Endothelial cell of umbilical vein (primary cell): ENCODE measurements at regions of chr12 and their contacts with region 1.

Region 1: GRCh38 chr12:27523642-27524493 is at the start of gene PPFIBP1:
- DNase-seq: peak; percentile 99
- H3K4me3 ChIP-seq: peak within 1 kb of the TSS; percentile 65 to 95 (median 80)
- H3K27ac ChIP-seq: peak within 1 kb of the TSS; percentile 77
- H3K4me1 ChIP-seq: peaks cover 25% of the 10 kb centered on the region
- H3K27me3 ChIP-seq: no peaks in the 10 kb centered on the region
- CTCF ChIP-seq: peak in 1 of 2 donors; percentile 49
- POLR2A ChIP-seq: peak; percentile 90
- total RNA-seq, gene PPFIBP1: 154 TPM in 2 replicates

Region 2: GRCh38 chr12:27140478-27140969 is 383.3 kb before region 1 on chr12:
- CTCF ChIA-PET with region 1: no interaction called
- POLR2A ChIA-PET with region 1: no interaction called
- dilution Hi-C with region 1: no loop called
- intact Hi-C with region 1: no loop called
- DNase-seq: no peak
- H3K4me3 ChIP-seq: no peak overlapping the region
- H3K27ac ChIP-seq: no peak overlapping the region
- H3K4me1 ChIP-seq: peaks cover 2% of the 10 kb centered on the region
- H3K27me3 ChIP-seq: no peaks in the 10 kb centered on the region
- CTCF ChIP-seq: no peak
- POLR2A ChIP-seq: no peak

Region 3: DNA sequence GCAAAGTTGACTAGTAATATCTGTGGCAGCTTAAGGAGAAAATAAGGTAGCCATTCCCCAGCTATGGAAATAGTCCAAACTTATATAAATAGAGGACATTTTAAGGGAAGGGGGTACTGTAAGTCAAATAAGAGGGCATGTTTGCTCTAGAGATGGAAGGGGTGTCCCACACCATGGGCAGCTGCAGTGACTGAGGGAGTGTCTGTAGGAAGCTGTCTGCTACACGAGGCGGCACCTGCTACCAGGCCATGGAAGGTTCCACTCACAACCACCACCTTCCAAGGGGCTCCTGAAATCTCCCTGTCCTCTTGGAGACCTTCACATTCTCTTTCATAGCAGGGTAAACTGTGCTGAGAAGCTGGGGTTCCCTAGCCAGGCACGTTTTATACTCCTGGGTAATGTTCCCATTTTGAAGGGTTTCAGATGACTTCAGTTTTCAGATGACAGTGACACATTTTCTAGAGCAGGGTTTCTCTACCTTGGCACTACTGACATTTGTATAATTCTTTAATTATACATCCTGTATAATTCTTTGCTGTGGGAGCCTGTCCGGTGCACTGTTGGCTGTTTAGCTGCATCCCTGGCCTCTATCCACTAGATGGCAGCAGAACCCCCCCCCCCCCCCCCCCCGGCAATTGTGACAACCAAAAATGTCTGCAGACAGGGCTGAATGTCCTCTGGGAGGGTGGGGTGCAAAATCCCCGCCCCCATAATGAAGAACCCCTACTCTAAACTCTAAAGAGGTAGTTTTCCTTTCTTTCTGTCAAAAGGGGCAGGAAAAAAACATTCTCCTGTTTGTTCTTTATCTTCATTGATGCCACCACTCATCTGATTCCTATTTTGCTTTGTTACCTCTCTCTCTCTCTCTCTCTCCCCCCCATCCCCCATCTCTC is 88.9 kb before region 1 on chr12:
- CTCF ChIA-PET with region 1: interaction called, 53 read pairs
- POLR2A ChIA-PET with region 1: no interaction called
- dilution Hi-C with region 1: no loop called
- intact Hi-C with region 1: loop called (anchors 1 kb)
- DNase-seq: peak; percentile 17
- H3K4me3 ChIP-seq: no peak overlapping the region
- H3K27ac ChIP-seq: no peak overlapping the region
- H3K4me1 ChIP-seq: peaks cover 4% of the 10 kb centered on the region
- H3K27me3 ChIP-seq: no peaks in the 10 kb centered on the region
- CTCF ChIP-seq: peak; percentile 45 to 69
- POLR2A ChIP-seq: no peak

Region 4: DNA sequence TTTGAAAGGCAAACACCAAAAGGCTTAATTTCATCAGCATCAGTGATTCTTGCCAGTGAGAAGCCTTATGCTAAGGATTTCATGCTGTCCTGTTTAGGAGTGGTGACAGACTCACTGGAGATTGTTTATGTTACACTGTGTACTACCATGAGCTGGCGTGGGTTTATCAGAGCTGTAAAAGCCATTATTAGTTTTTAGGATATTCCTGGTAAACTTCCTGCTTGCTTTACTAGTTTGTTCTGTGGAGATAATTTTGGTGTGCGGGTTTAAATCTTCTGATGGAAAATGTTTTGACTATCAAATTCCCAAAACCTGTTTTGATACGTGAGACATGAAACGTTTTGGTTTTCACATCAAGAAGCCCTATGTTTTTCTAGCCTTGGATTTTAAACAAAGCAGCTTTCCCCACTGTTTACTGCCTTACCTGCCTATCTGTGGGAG is 15.3 kb after region 1 on chr12:
- CTCF ChIA-PET with region 1: interaction called, 4 read pairs
- POLR2A ChIA-PET with region 1: interaction called, 7 read pairs
- dilution Hi-C with region 1: no loop called
- intact Hi-C with region 1: loop called (anchors 1 kb)
- DNase-seq: no peak
- H3K4me3 ChIP-seq: no peak overlapping the region
- H3K27ac ChIP-seq: no peak overlapping the region
- H3K4me1 ChIP-seq: peaks cover 22% of the 10 kb centered on the region
- H3K27me3 ChIP-seq: no peaks in the 10 kb centered on the region
- CTCF ChIP-seq: no peak
- POLR2A ChIP-seq: no peak

Region 5: GRCh38 chr12:27564612-27565213 is 40.8 kb after region 1 on chr12:
- CTCF ChIA-PET with region 1: interaction called, 13 read pairs
- POLR2A ChIA-PET with region 1: no interaction called
- dilution Hi-C with region 1: no loop called
- intact Hi-C with region 1: no loop called
- DNase-seq: peak; percentile 67
- H3K4me3 ChIP-seq: no peak overlapping the region
- H3K27ac ChIP-seq: peak overlapping the region; percentile 63
- H3K4me1 ChIP-seq: peaks cover 34% of the 10 kb centered on the region
- H3K27me3 ChIP-seq: no peaks in the 10 kb centered on the region
- CTCF ChIP-seq: no peak
- POLR2A ChIP-seq: no peak

Region 6: DNA sequence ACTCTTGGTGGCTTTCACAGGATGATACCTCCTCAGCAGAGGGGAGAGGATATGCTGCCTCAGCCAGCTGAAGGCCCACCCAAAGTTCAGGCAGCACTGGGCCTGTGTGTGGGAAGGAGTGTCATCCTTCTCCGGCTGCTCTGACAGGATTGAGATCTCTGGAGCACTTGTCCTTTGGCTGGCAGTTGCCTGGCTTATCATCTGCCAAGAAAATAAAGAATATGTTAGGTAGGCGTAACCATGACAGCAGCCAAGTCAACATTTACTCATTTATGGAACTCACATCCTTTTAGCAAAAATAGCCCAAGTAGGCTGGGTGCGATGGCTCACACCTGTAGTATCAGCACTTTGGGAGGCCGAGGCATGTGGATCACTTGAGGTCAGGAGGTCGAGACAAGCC is 68.7 kb after region 1 on chr12:
- CTCF ChIA-PET with region 1: no interaction called
- POLR2A ChIA-PET with region 1: interaction called, 20 read pairs
- dilution Hi-C with region 1: no loop called
- intact Hi-C with region 1: no loop called
- DNase-seq: peak; percentile 67
- H3K4me3 ChIP-seq: no peak overlapping the region
- H3K27ac ChIP-seq: no peak overlapping the region
- H3K4me1 ChIP-seq: no peaks in the 10 kb centered on the region
- H3K27me3 ChIP-seq: no peaks in the 10 kb centered on the region
- CTCF ChIP-seq: no peak
- POLR2A ChIP-seq: no peak

Region 7: DNA sequence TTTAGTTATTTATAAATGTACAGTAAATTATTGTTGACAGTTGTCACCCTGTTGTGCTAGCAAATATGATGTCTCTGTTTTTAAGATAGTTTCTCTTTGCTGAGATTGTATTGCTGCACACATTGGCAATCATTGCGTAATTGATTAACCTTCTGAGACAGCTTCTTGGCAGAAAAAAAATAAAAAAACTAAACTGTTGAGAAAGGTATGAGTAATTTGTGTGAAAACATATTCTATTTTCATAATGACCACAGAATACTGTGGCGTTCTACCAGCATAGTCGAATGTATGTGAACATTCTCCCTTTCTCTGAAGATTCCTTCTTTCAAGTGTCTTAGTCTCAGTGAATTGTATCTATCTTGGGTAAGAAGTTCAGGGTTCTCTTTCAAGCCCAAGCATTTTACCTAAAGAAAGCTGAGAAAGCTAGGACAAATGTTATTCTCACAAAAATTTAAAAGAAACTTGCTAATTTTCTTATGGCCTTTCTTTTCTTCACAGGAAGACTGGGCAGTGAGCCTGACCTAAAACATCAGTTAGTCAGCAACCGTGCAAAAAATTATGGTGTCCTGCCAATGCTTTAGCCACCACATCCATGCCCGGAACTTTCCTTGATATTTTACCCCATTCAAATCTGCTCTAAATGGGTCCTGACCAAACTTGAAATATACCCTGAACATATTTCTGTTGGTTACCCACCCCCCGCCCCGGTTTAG is 103.4 kb after region 1 on chr12:
- CTCF ChIA-PET with region 1: interaction called, 3 read pairs
- POLR2A ChIA-PET with region 1: interaction called, 3 read pairs
- dilution Hi-C with region 1: no loop called
- intact Hi-C with region 1: loop called (anchors 1 kb)
- DNase-seq: peak; percentile 75
- H3K4me3 ChIP-seq: peak overlapping the region in 1 of 3 experiments; percentile 27
- H3K27ac ChIP-seq: peak overlapping the region; percentile 88
- H3K4me1 ChIP-seq: peaks cover 83% of the 10 kb centered on the region
- H3K27me3 ChIP-seq: no peaks in the 10 kb centered on the region
- CTCF ChIP-seq: no peak
- POLR2A ChIP-seq: no peak

Region 8: DNA sequence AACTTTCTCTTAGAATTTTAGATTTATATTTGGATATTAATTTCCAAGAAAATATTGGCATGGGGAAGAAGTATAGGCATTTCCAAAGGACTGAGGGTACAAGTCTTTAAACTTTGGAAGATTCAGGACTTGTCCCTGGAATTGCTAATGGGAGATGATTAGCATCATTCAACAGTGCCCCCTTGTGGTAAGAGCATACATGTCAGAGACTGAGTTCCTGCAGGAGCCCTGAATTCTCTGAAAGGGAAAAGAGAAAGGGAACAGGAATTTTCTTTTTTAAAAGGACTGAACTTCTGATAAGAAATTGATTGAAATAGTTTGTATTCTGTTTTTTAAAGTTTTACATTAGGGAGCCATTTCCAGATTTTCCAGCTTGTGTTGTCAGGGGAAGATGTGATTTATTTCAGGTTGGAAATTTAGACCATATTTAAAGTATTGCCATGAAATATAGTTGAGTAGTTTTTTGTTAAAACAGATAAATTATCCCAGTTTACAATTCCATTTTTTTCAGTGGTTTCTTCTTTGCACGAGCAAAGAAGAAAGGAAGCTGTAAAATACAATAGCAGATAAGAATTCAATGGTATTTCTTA is 128.4 kb after region 1 on chr12:
- CTCF ChIA-PET with region 1: interaction called, 6 read pairs
- POLR2A ChIA-PET with region 1: no interaction called
- dilution Hi-C with region 1: no loop called
- intact Hi-C with region 1: loop called (anchors 1 kb)
- DNase-seq: peak; percentile 86
- H3K4me3 ChIP-seq: no peak overlapping the region
- H3K27ac ChIP-seq: no peak overlapping the region
- H3K4me1 ChIP-seq: peaks cover 8% of the 10 kb centered on the region
- H3K27me3 ChIP-seq: no peaks in the 10 kb centered on the region
- CTCF ChIP-seq: peak; percentile 67 to 69
- POLR2A ChIP-seq: no peak

Region 9: DNA sequence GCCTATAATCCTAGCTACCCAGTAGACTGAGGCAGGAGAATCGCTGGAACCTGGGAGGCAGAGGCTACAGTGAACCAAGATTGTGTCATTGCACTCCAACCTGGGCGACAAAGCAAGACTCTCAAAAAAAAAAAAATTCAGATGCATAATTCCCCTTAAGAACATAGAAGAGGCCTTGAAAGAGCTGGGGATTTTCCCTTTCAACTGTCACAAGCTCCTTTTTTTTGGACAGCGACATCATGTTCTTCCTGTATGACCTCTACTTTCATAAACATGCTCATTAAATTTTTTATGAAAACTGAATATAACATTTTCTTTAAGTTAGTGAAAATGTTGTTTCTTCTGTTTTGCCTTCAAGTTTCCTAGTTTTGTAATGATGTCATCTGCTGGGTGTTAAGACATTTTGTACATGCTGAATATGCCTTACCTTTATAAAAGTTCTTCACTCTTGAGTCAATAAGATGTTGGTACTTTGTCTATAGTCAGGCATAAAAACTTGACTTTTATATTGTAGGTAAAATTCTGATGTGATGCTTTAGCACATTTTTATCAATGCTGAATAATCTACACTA is 372.6 kb after region 1 on chr12:
- CTCF ChIA-PET with region 1: no interaction called
- POLR2A ChIA-PET with region 1: no interaction called
- dilution Hi-C with region 1: no loop called
- intact Hi-C with region 1: no loop called
- DNase-seq: no peak
- H3K4me3 ChIP-seq: no peak overlapping the region
- H3K27ac ChIP-seq: no peak overlapping the region
- H3K4me1 ChIP-seq: no peaks in the 10 kb centered on the region
- H3K27me3 ChIP-seq: no peaks in the 10 kb centered on the region
- CTCF ChIP-seq: no peak
- POLR2A ChIP-seq: no peak